ENCODE measurements at regions of chr3 and their contacts with region 1.

Region 1: GRCh38 chr3:183766745-183767606 is 58.4 kb downstream of the MAP6D1 start:
- DNase-seq: peak; percentile 48
- H3K4me3 ChIP-seq: no peak overlapping the region
- H3K27ac ChIP-seq: no peak overlapping the region
- H3K4me1 ChIP-seq: peaks cover 22% of the 10 kb centered on the region
- H3K27me3 ChIP-seq: no peaks in the 10 kb centered on the region
- CTCF ChIP-seq: peak; percentile 88

Region 2: GRCh38 chr3:183468424-183468823 is 298.6 kb before region 1 on chr3:
- intact Hi-C with region 1: loop called (anchors 5 kb)
- DNase-seq: no peak
- H3K4me3 ChIP-seq: no peak overlapping the region
- H3K27ac ChIP-seq: no peak overlapping the region
- H3K4me1 ChIP-seq: peaks cover 12% of the 10 kb centered on the region
- H3K27me3 ChIP-seq: no peaks in the 10 kb centered on the region
- CTCF ChIP-seq: no peak

Region 3: DNA sequence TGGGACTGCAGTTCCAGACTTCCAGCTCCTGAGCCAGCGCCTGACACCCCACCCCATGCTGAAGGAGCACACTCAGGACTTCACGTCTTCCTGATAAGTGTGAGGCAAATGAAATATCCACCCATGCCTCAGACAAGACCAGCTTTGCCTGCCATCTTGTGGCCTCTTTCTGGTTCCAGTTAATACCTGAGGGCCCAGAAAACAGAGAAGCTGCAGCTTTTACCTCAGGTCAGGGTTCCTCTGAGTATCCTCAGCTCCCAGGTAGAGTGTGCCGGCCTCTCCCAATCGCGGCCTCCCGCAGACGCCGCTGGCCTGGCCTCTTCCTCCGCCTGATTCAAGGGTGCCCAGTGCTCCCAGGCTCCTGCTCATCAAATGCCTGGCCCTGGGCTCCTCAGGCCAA is 206.4 kb before region 1 on chr3:
- intact Hi-C with region 1: no loop called
- DNase-seq: no peak
- H3K4me3 ChIP-seq: no peak overlapping the region
- H3K27ac ChIP-seq: no peak overlapping the region
- H3K4me1 ChIP-seq: peaks cover 33% of the 10 kb centered on the region
- H3K27me3 ChIP-seq: no peaks in the 10 kb centered on the region
- CTCF ChIP-seq: peak; percentile 36